ENCODE measurements at regions of chr12 and their contacts with region 1.

Region 1: GRCh38 chr12:24991209-24992049 is 42.5 kb upstream of the BCAT1 start:
- DNase-seq: no peak
- H3K4me3 ChIP-seq: no peak overlapping the region
- H3K27ac ChIP-seq: no peak overlapping the region
- H3K4me1 ChIP-seq: no peaks in the 10 kb centered on the region
- H3K27me3 ChIP-seq: no peaks in the 10 kb centered on the region
- CTCF ChIP-seq: peak in 2 of 3 donors; percentile 40 to 68
- EP300 ChIP-seq: no peak
- POLR2A ChIP-seq: no peak

Region 2: GRCh38 chr12:25130741-25131188 is 139.3 kb after region 1 on chr12:
- intact Hi-C with region 1: loop called in 2 of 4 experiments (anchors 5 to 10 kb)
- DNase-seq: no peak
- H3K4me3 ChIP-seq: no peak overlapping the region
- H3K27ac ChIP-seq: no peak overlapping the region
- H3K4me1 ChIP-seq: no peaks in the 10 kb centered on the region
- H3K27me3 ChIP-seq: no peaks in the 10 kb centered on the region
- CTCF ChIP-seq: peak; percentile 21 to 43 (median 23)
- EP300 ChIP-seq: no peak
- POLR2A ChIP-seq: no peak

Region 3: DNA sequence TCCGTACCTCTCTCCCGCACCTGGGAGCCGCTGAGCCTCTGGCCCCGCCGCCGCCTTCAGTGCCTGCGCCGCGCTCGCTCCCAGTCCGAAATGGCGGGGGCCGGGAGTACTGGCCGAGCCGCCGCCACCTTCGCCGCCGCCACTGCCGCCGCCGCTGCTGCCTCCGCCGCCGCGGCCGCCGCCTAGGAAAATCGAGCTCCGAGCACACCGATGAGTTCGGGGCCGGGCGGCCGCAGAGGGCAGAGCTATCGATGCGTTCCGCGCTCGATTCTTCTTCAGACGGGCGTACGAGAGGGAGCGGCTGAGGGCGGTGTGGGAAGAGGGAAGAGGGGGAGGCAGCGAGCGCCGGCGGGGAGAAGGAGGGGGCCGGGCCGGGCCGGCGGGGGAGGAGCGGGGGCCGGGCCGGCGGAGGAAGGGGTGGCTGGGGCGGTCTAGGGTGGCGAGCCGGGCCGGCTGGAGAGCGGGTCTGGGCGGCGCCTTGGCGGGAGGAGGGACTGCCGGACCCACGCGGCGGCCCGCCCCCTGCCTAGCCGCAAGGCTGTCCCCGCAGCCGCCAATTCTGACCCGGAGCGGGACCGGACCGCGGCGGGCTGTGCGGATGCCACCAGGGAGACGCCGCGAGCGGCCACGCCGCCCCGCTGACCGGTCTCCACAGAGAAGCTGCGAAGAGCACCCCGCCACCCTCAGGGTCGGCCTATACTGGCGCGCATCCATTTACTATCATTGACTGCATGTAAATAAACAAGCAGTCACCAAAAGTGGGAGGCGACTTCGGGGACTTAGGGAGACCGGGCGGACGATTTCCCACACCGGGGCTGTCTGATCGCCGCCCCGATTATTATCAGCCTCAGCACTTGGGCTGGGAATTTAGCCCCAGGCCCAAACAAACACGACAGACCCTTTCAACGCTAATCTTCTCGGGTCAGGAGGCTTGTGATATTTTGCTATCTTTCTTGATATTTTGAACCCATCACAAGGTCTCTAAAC is 259.6 kb after region 1 on chr12 and contains the start of gene KRAS:
- intact Hi-C with region 1: no loop called
- DNase-seq: peak; percentile 95 to 97 (median 97)
- H3K4me3 ChIP-seq: peak within 1 kb of the TSS; percentile 99
- H3K27ac ChIP-seq: peak within 1 kb of the TSS; percentile 84
- H3K4me1 ChIP-seq: peaks cover 2% of the 10 kb centered on the region
- H3K27me3 ChIP-seq: no peaks in the 10 kb centered on the region
- CTCF ChIP-seq: no peak
- EP300 ChIP-seq: no peak
- POLR2A ChIP-seq: peak; percentile 87
- total RNA-seq, gene KRAS: 8.7 to 28.2 (median 16.4) TPM